ENCODE measurements at regions of chr17 and their contacts with region 1.

Region 1: DNA sequence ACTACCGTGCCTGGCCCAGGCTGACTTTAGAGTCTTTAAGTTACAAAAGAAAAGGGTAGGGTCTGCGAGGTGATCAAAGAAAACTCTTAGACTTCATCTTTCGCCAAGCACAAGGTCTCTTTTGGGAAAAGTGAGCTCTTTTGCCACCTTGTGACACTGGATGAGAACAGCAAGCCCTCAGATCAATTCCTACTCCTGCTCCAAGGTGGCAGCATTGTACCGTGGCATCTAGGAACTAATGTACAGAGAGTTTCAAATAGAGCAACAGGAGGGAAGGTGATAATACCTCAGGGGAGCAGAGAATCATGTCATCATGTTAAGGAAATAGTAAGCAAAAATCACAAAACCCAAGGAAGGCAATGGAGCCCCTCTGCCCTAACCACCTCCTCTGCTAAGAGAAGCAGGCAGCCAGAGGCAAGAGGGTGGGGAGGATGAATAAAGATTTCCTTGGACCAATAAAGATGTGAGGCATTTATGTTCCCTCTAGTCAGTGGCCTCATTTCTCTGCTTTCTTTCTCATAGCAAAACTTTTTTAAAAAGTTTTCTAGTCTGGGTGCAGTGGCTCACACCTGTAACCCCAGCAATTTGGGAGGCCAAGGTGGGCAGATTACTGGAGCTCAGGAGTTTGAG is 2.1 kb upstream of the C17orf78 start:
- DNase-seq: peak; percentile 95
- H3K4me3 Mint-ChIP-seq: no peak overlapping the region
- H3K27ac Mint-ChIP-seq: no peak overlapping the region
- H3K4me1 Mint-ChIP-seq: peaks cover 9% of the 10 kb centered on the region
- H3K27me3 Mint-ChIP-seq: no peaks in the 10 kb centered on the region
- CTCF ChIP-seq: peak; percentile 100

Region 2: DNA sequence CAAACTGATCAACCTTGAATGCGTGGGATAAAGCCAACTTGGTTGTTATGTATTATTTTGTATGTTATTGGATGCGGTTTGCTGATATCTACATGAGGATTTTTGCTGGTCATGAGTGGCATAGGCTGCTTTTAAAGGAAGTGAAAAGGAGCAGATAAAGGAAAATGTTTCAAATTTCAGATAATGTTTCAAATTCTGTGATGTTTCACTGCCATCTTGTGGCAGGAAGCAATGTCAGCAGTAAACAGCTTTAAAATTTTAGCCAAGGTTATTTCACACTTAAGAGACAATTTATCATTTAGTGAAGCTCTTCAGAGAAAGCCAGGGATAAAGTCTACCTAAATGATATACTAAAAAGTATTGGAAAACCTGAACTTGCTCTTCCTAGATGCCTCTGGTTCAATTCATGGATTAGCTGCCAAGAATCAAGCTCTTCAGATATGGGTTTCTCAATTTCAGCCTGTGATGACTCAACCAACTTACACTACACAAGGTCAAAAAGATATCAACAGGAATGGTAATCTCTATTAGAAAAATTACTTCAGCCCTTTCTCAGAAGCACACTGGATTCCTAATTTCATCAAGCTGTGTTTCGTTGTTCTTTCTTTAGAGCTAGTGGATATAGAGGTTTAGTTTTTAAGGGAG is 133.8 kb before region 1 on chr17:
- CTCF ChIA-PET with region 1: interaction called, 22 read pairs
- intact Hi-C with region 1: no loop called
- DNase-seq: no peak
- H3K4me3 Mint-ChIP-seq: no peak overlapping the region
- H3K27ac Mint-ChIP-seq: no peak overlapping the region
- H3K4me1 Mint-ChIP-seq: peaks cover 11% of the 10 kb centered on the region
- H3K27me3 Mint-ChIP-seq: no peaks in the 10 kb centered on the region
- CTCF ChIP-seq: peak; percentile 94

Region 3: DNA sequence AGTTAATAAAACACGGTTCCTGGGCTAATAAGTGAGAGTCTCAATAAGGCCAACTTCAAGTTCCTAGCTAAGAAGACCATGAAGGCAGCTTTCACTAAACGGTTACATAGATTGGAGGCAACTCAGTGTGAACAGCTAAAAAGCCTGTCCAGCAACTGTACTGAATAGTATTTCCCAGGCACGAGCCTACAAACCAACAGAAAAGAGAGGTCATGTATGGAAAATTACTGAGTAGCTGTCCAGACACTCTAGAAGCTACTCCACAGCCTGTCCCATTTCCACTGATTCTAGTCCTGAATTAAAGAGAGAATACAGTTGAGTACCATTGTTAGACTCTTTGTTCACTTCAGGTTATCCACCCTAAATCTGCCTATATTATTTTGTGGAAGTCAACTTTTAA is 34.3 kb before region 1 on chr17:
- CTCF ChIA-PET with region 1: interaction called, 13 read pairs
- intact Hi-C with region 1: no loop called
- DNase-seq: no peak
- H3K4me3 Mint-ChIP-seq: no peak overlapping the region
- H3K27ac Mint-ChIP-seq: no peak overlapping the region
- H3K4me1 Mint-ChIP-seq: no peaks in the 10 kb centered on the region
- H3K27me3 Mint-ChIP-seq: no peaks in the 10 kb centered on the region
- CTCF ChIP-seq: no peak

Region 4: DNA sequence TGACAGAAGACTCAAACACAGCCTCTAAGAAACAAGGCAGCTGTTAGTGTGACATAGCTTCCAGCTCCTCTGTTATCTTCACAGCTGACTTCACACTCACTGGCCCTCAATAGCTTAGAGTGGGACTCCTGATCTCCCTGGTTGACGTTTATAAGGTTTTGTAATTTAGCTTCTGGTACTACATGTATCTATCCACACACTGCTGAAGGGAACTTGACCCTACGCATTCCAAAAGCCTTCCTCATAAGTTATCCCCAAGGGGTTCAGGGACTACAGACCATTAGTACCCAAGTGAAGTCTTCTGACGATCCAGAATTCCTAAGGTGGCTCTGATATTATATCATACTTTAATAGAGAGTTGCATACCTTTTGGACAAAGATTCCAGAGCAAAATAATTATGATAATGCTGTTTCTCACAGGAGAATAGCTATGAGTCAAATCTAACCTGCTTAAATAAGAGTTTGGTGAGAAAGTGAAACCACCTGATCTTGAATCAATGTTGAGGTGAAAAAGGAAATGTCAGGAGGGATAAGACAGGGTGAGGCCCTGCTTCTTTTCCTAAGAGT is 18.5 kb after region 1 on chr17:
- CTCF ChIA-PET with region 1: interaction called, 300 read pairs
- intact Hi-C with region 1: loop called (anchors 1 kb)
- DNase-seq: no peak
- H3K4me3 Mint-ChIP-seq: peak overlapping the region; percentile 38
- H3K27ac Mint-ChIP-seq: peak overlapping the region; percentile 9
- H3K4me1 Mint-ChIP-seq: peaks cover 20% of the 10 kb centered on the region
- H3K27me3 Mint-ChIP-seq: no peaks in the 10 kb centered on the region
- CTCF ChIP-seq: no peak

Region 5: GRCh38 chr17:37570527-37571093 is 197.0 kb after region 1 on chr17:
- CTCF ChIA-PET with region 1: interaction called, 17 read pairs
- intact Hi-C with region 1: no loop called
- DNase-seq: peak; percentile 92
- H3K4me3 Mint-ChIP-seq: no peak overlapping the region
- H3K27ac Mint-ChIP-seq: no peak overlapping the region
- H3K4me1 Mint-ChIP-seq: no peaks in the 10 kb centered on the region
- H3K27me3 Mint-ChIP-seq: no peaks in the 10 kb centered on the region
- CTCF ChIP-seq: peak; percentile 88